Left colon (tissue), 2 donors: ENCODE measurements at regions of chr1 and their contacts with region 1.

Region 1: DNA sequence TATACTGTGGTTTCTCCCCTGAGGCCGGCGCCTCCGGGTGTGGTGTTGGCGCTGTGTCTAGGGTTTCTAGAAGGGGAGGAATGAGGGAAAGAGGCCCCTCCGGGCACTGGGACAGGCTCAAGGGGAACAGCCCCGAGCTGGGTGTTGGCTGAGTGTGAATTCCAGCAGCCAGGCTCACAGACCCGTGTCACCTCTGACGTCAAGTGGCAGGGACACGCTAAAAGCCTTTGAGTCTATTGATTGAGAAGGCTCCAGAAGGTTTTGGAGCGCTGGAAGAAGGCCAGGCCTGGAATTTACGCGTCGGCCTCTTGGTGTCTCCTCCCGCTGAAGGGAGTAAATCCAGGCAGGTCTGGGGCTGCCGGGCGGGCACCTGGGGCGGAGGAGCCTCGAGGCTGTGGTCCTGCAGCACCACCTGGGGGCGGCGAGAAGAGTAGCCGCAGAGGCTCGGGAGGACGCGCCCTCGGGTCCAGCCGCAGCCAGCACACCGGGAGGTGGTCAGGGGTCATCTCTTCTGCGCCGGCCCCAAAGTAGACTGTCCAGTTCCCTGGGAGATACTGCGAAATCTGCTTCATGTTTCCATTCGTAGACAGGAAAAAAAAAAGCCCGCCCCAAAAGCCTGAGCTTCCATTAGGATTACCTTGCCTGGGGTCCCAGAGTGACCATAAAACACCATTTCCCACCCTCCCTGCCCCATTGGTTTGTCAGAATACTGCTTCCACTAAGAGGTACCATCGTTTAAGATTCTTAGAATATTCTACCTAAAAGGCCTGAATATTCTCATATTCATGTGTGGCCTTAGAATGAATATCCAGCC is 61.7 kb downstream of the TLR5 start:
- DNase-seq: peak; percentile 83
- ATAC-seq: peak; percentile 100

Region 2: DNA sequence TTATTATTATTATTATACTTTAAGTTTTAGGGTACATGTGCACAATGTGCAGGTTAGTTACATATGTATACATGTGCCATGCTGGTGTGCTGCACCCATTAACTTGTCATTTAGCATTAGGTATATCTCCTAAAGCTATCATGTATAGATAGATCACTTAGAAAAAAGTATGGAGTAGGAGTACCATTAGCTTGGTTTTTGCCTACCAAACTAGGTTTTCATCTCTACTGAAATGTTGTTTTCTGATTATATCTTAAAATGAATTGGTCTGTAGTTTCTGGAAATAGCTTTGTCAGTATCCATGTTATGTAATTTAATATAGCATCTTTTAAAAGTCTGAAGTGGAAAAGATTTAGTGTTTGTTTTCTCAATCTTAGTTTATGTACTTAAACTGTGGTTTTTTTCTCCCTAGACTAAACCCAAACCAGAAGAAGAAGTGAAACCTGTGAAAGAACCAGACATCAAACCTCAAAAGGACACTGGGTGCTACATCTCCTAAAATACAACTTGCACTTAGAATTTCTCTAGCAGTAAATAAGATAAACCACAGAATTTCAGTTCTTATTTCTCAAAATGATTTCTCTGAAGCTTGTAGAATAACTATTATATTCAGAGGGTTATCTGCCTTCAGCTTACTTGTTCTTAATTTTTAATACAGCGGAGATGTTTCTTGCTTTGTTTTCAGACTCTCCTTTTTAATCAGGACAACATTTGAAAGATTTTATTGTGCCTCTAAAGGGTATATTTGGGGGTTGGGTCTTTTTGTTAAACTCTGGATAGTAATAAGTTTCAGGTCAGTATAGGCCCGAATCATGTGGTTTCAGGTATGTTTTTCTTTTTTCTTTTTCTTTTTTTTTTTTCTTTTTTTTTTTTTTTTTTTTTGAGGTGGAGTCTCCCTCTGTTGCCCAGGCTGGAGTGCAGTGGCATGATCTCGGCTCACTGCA is 348.9 kb before region 1 on chr1:
- intact Hi-C with region 1: loop called in 1 of 2 experiments (anchors 10 kb)
- DNase-seq: no peak
- ATAC-seq: no peak

Region 3: GRCh38 chr1:222792744-222793143 is 288.6 kb before region 1 on chr1:
- intact Hi-C with region 1: loop called in 1 of 2 experiments (anchors 5 kb)
- DNase-seq: no peak
- ATAC-seq: no peak